Activated CD8-positive, alpha-beta T cell treated with anti-CD3 and anti-CD28 coated beads, Interleukin-2, amount 10 ng/mL, durations not matched to agents 7 days and 5 days (primary cell): ENCODE measurements at regions of chr6 and their contacts with region 1.

Region 1: DNA sequence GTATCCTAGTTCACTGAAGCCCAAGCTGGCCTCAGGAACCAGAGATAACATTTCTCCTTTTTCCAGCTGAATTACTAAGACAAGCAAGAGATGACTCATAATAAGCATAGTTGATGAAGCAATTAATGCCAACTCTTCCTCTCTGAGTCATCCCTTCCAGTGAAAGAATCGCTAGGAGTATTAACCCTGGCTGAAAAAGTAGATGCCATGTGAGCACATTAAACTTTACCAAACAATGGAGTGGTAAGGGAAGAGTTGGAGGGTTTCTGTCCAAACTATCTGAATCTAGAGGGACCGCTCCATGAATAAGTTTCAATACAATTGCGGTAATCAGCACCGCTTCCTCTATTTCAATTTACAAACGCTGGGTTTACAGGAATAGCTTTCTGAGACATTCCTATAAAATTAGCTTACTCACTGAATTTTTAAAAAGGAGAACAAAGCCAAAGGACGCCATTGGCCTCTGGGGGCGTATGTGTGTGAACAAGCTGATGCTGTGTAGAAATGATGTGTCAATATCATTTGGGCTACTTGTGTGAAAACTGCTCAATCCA is 48.3 kb downstream of the ATXN1 start:
- DNase-seq: no peak
- ATAC-seq: peak; percentile 37
- H3K4me3 Mint-ChIP-seq: peak overlapping the region; percentile 37
- H3K27ac Mint-ChIP-seq: peak overlapping the region; percentile 81
- H3K4me1 Mint-ChIP-seq: peaks cover 37% of the 10 kb centered on the region
- H3K27me3 Mint-ChIP-seq: no peaks in the 10 kb centered on the region

Region 2: GRCh38 chr6:16570946-16571345 is 142.1 kb before region 1 on chr6:
- CTCF ChIA-PET with region 1: no interaction called
- POLR2A ChIA-PET with region 1: no interaction called
- DNase-seq: no peak
- ATAC-seq: no peak
- H3K4me3 Mint-ChIP-seq: no peak overlapping the region
- H3K27ac Mint-ChIP-seq: no peak overlapping the region
- H3K4me1 Mint-ChIP-seq: peaks cover 13% of the 10 kb centered on the region
- H3K27me3 Mint-ChIP-seq: no peaks in the 10 kb centered on the region

Region 3: GRCh38 chr6:16663901-16664300 is 49.1 kb before region 1 on chr6:
- CTCF ChIA-PET with region 1: no interaction called
- POLR2A ChIA-PET with region 1: no interaction called
- DNase-seq: no peak
- ATAC-seq: no peak
- H3K4me3 Mint-ChIP-seq: no peak overlapping the region
- H3K27ac Mint-ChIP-seq: no peak overlapping the region
- H3K4me1 Mint-ChIP-seq: peaks cover 27% of the 10 kb centered on the region
- H3K27me3 Mint-ChIP-seq: no peaks in the 10 kb centered on the region

Region 4: GRCh38 chr6:16731478-16732051 is 18.6 kb after region 1 on chr6:
- CTCF ChIA-PET with region 1: interaction called, 17 read pairs
- POLR2A ChIA-PET with region 1: interaction called, 6 read pairs
- DNase-seq: peak; percentile 62
- ATAC-seq: peak; percentile 87
- H3K4me3 Mint-ChIP-seq: peak overlapping the region; percentile 63
- H3K27ac Mint-ChIP-seq: peak overlapping the region; percentile 82
- H3K4me1 Mint-ChIP-seq: peaks cover 65% of the 10 kb centered on the region
- H3K27me3 Mint-ChIP-seq: no peaks in the 10 kb centered on the region